ENCODE measurements at regions of chr12 and their contacts with region 1.

Region 1: GRCh38 chr12:45543906-45544315 is 185.6 kb upstream of the ARID2 start:
- DNase-seq: no peak
- ATAC-seq: peak; percentile 89
- H3K4me3 Mint-ChIP-seq: no peak overlapping the region
- H3K27ac Mint-ChIP-seq: no peak overlapping the region
- H3K4me1 Mint-ChIP-seq: peaks cover 4% of the 10 kb centered on the region
- H3K27me3 Mint-ChIP-seq: no peaks in the 10 kb centered on the region
- CTCF ChIP-seq: no peak

Region 2: DNA sequence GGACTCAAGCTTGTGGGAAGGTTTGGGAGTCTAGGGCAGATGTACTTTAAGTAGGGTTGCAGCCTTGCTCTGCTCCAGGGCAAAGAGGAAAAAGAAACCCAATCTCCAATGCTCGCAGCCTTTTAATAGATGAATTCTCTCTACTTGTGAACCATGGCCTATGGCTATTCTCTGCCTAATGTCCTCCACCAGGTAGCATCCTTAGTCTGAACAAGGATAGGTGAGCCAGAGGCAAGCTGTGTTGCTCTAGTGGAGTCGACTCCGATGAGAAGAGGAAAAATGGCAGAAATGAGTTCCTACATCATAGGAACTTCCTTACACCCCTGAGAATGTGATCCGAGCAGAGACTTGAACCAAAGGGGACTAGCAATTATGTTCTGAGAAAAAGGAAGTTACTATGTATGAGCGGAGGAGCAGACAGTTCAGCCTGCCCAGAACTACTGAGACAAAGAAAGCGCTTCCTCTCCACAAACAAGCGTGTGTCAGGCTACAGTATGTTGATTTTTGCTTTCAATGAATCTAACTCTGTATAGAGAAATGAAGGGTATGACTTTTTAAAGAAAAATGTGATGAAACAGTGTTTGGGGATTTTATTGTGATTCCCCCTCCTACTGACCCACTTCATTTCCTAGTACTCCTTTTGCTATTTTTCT is 32.0 kb after region 1 on chr12:
- CTCF ChIA-PET with region 1: interaction called, 3 read pairs
- POLR2A ChIA-PET with region 1: interaction called, 3 read pairs
- intact Hi-C with region 1: loop called (anchors 2 kb)
- DNase-seq: no peak
- ATAC-seq: peak; percentile 76
- H3K4me3 Mint-ChIP-seq: peak overlapping the region; percentile 61
- H3K27ac Mint-ChIP-seq: peak overlapping the region; percentile 78
- H3K4me1 Mint-ChIP-seq: peaks cover 44% of the 10 kb centered on the region
- H3K27me3 Mint-ChIP-seq: no peaks in the 10 kb centered on the region
- CTCF ChIP-seq: no peak

Region 3: DNA sequence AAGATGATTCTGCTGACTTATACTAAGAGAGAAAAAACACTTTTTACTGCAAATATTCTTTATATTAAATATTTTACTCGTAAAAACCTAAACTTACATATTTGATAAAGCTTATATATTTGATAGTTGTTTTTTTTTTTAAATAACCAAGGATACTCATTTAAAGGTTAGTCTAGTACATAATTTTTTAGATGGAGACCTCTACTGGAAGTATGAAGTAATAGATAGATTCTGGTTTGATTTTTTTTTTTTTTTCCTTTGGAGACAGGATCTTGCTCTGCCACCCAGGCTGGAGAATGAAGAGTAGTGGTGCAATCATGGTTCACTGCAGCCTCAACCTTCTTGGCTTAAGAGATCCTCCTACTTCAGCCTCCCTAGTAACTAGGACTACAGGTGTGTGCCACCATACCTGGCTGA is 202.0 kb after region 1 on chr12:
- CTCF ChIA-PET with region 1: interaction called, 99 read pairs
- POLR2A ChIA-PET with region 1: no interaction called
- intact Hi-C with region 1: loop called (anchors 1 kb)
- DNase-seq: no peak
- ATAC-seq: peak; percentile 52
- H3K4me3 Mint-ChIP-seq: no peak overlapping the region
- H3K27ac Mint-ChIP-seq: no peak overlapping the region
- H3K4me1 Mint-ChIP-seq: peaks cover 16% of the 10 kb centered on the region
- H3K27me3 Mint-ChIP-seq: no peaks in the 10 kb centered on the region
- CTCF ChIP-seq: no peak

Region 4: GRCh38 chr12:45928309-45928708 is 384.4 kb after region 1 on chr12:
- CTCF ChIA-PET with region 1: no interaction called
- POLR2A ChIA-PET with region 1: no interaction called
- intact Hi-C with region 1: loop called (anchors 10 kb)
- DNase-seq: no peak
- ATAC-seq: no peak
- H3K4me3 Mint-ChIP-seq: no peak overlapping the region
- H3K27ac Mint-ChIP-seq: peak overlapping the region; percentile 2
- H3K4me1 Mint-ChIP-seq: no peaks in the 10 kb centered on the region
- H3K27me3 Mint-ChIP-seq: no peaks in the 10 kb centered on the region
- CTCF ChIP-seq: no peak

Region 5: DNA sequence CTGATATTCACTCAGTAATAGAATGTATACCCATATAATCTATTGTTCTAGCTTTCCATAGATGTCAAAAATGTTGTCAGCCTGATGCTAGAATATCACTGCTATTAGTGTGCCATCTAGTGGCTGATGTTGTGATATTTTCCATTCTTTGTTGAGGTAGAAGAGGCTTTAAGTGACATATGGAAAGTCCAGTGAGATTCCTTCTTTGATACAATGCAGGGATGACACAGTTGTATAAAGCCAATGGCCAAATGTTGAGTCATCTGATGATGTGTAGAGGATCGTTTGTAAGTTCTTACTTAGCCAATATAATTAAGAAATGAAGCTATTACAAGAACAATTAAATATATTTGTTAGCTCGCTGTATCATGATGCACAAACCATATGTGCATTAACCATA is 1477.4 kb after region 1 on chr12:
- CTCF ChIA-PET with region 1: interaction called, 4 read pairs
- POLR2A ChIA-PET with region 1: no interaction called
- intact Hi-C with region 1: loop called (anchors 5 kb)
- DNase-seq: no peak
- ATAC-seq: no peak
- H3K4me3 Mint-ChIP-seq: no peak overlapping the region
- H3K27ac Mint-ChIP-seq: no peak overlapping the region
- H3K4me1 Mint-ChIP-seq: no peaks in the 10 kb centered on the region
- H3K27me3 Mint-ChIP-seq: peaks cover 3% of the 10 kb centered on the region
- CTCF ChIP-seq: peak; percentile 52

Measured in activated B cell treated with CpG ODN at 0.5 μM for 24 hours (primary cell).